HCT116 (cell line): ENCODE measurements at regions of chr4 and their contacts with region 1.

Region 1: DNA sequence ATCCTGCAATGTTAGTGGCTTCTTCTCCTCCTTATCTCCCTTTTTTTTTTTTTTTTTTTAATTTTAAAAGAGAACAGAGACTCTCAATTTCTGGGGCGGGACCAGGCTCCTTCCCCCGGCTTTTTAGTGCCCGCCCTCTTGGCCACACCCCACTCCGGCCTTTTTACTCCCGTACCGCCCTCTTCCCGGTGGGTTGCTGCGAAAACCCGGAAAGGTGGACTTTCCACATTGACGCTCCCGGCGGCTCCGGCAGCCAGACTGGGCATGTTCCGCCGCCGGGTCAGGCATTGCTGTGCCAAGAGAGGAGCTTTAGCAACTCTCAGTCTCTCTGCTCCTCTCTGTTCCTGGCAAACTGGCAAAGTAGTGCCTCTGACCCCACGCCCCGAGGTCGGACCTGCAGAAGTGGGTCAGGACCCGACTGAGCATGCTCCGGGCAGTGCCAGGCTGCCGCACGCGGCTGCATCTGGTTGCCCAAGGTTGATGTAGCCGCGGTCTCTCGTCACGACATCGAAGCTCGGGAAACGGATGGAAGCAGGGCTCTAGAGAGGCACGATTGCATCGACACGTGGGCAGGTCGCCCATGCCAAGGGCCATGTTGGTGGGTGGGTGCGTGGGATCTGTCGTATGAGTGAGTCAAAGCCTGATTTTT is 1.1 kb upstream of the MFAP3L start:
- DNase-seq: peak; percentile 95
- ATAC-seq: peak; percentile 72
- H3K4me3 ChIP-seq: peak overlapping the region; percentile 77 to 82
- H3K27ac ChIP-seq: peak overlapping the region; percentile 75
- H3K4me1 ChIP-seq: peaks cover 2 to 16% of the 10 kb centered on the region in 2 experiments
- H3K27me3 ChIP-seq: no peaks in the 10 kb centered on the region
- CTCF ChIP-seq: no peak
- POLR2A ChIP-seq: no peak
- RAD21 ChIP-seq: no peak

Region 2: GRCh38 chr4:169791527-169792156 is 235.7 kb before region 1 on chr4:
- CTCF ChIA-PET with region 1: no interaction called
- POLR2A ChIA-PET with region 1: no interaction called
- RAD21 ChIA-PET with region 1: no interaction called
- intact Hi-C with region 1: loop called (anchors 2 kb)
- DNase-seq: peak; percentile 85
- ATAC-seq: peak; percentile 91
- H3K4me3 ChIP-seq: peak overlapping the region; percentile 34 to 46
- H3K27ac ChIP-seq: no peak overlapping the region
- H3K4me1 ChIP-seq: peaks cover 2 to 20% of the 10 kb centered on the region in 2 experiments; a peak in 2 of 4 replicates
- H3K27me3 ChIP-seq: peaks cover 12% of the 10 kb centered on the region; the same call in 1 of the 2 replicates
- CTCF ChIP-seq: peak; percentile 47 to 76 (median 63)
- POLR2A ChIP-seq: no peak
- RAD21 ChIP-seq: peak; percentile 71